GM10248 (cell line): ENCODE measurements at regions of chr2 and their contacts with region 1.

Region 1: GRCh38 chr2:196453613-196454047 is 185.9 kb upstream of the CCDC150 start:
- DNase-seq: peak; percentile 38
- CTCF ChIP-seq: peak; percentile 75

Region 2: DNA sequence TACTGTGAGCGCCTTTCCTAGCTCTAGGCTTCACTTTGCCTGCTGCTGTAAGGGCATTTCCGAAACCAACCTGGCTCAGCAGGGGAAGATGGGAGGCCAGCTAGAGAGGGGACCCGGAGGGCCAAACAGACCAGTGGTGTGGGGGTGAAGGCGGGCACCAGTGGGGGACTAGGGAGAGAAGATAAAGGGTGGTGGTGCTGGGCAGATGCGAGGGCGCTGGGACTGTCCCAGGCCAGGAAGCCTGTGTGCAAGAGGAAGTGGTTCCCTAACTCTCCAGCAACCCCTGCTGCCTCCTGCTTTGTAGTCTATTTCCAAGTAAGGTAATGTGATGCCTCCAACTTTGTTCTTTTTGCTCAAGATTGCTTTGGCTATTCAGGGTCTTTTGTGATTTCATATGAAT is 458.1 kb before region 1 on chr2:
- CTCF ChIA-PET with region 1: no interaction called
- POLR2A ChIA-PET with region 1: no interaction called
- DNase-seq: no peak
- CTCF ChIP-seq: no peak

Region 3: DNA sequence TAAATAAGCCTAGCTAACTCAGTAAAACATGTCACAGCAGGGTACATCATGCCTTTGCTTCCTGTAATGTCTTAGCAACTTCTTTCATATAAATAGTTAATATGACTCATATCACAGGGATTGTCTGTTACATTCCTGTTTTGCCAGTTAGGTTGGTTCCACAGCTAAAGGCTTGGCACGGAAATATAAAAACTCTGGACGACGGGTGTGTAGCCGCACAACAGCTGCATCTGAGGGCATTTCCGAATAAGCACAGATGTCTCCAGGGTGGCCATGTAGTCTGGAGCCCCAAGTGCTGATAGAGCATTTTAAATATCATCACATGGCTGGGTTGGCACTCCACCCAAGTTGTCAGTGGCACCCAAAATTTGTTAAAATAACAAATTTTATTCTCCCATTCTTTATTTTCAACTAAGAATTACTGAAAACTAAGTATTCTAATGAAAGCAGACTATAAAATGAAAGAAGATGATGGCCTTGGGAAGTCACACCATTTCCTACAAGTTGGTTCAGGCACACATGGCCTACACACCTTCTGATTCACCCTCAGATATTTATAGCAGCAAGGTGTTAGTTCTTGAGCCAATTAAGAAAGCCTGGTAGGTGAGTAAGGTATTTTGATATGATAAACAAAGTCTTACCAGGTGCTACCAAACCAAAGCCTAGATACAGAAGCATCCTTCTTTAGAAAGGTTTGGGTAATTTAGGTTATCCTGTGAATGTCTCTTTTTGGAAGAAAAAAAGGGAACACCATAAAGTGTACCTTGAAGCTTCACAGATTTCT is 220.4 kb before region 1 on chr2:
- CTCF ChIA-PET with region 1: interaction called, 11 read pairs
- POLR2A ChIA-PET with region 1: no interaction called
- DNase-seq: no peak
- CTCF ChIP-seq: no peak

Region 4: GRCh38 chr2:196309691-196310090 is 143.9 kb before region 1 on chr2:
- CTCF ChIA-PET with region 1: interaction called, 21 read pairs
- POLR2A ChIA-PET with region 1: no interaction called
- DNase-seq: no peak
- CTCF ChIP-seq: no peak

Region 5: DNA sequence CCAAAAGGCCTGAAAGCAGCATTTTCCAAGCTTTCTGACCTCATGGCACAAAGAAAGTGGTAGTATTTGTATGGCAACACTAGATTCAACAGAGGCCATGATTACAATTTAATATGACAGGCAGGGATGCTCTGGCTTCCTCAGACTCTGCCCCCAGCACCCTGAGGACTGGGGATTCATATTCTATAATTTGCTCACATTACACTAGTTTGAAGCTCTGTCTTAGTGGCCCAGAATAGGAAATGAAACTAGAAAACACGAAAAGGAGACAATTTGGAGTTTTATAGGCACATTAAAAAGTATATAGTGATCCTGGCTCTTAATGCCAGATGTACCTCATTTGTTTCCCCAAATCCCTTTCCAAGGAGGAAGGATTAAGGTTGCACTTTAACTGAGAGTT is 109.2 kb before region 1 on chr2:
- CTCF ChIA-PET with region 1: interaction called, 50 read pairs
- POLR2A ChIA-PET with region 1: no interaction called
- DNase-seq: no peak
- CTCF ChIP-seq: no peak

Region 6: DNA sequence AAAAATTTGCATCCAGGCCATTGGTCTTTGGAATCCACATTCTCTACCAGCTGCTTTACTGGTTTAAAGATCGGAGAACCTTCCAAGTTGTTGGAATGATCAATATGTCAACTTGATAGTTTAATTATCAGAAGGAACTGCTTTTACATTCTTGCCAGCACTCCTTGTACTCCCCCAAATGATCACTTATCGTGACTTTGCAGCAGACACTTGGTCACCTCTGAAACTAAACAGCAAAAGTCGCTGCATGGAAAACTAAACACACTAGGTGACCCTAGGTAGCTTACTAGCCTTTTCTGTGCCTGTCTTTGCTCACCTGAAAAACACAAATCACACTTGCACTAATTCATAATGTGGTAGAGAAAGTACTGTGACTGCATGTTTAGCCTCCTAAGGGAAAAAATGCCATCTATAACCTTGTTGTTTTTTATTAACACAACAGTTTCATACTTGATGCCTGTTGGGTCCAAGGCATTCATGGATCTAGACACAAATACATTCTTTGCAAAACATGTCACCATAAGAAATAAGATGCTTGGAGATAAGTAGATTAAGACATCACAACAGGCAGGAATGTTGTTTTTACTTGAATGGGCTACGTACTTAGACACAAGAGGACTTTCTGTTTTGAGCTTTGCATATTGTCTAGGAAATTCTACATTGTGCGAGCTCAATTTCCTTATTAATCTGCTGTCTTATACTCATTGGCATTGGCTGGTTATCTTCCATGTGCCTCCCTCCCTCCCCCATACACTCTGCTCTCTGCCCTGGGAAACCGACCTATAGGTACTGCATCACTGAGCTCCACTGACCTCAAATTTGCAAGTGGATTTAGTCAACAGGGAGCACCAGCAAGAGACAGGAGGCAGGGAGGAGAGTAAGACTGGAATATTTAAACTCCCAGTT is 63.1 kb before region 1 on chr2:
- CTCF ChIA-PET with region 1: interaction called, 18 read pairs
- POLR2A ChIA-PET with region 1: no interaction called
- DNase-seq: no peak
- CTCF ChIP-seq: no peak

Region 7: GRCh38 chr2:196421880-196422279 is 31.8 kb before region 1 on chr2:
- CTCF ChIA-PET with region 1: interaction called, 51 read pairs
- POLR2A ChIA-PET with region 1: no interaction called
- DNase-seq: no peak
- CTCF ChIP-seq: no peak

Region 8: DNA sequence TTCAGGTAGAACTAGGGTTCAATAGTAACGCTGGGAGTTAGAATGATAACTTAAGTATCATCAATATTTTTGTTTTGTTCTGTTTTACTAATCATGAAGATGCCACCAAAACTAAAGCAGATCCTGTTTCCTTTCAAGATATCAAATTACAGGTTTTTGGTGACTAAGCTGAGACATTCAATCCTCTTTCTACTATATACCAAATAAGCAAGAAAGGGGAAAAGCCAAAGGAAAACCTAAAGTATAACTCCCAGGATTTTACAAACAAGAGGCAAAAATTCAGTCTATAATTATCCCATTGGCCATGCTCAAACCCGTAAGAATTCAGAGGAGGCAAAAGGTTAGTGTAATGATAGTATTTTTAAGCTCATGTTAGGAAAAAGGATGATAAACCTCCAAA is 10.7 kb after region 1 on chr2:
- CTCF ChIA-PET with region 1: interaction called, 39 read pairs
- POLR2A ChIA-PET with region 1: no interaction called
- DNase-seq: no peak
- CTCF ChIP-seq: no peak